Activated CD4-positive, alpha-beta T cell treated with anti-CD3 and anti-CD28 coated beads, Interleukin-2, amount 10 ng/mL, durations not matched to agents 24 days and 14 days (primary cell): ENCODE measurements at regions of chr9 and their contacts with region 1.

Region 1: GRCh38 chr9:69193685-69194032 is 19.6 kb downstream of the TJP2 start:
- DNase-seq: no peak
- H3K4me3 Mint-ChIP-seq: no peak overlapping the region
- H3K27ac Mint-ChIP-seq: no peak overlapping the region
- H3K4me1 Mint-ChIP-seq: peaks cover 29% of the 10 kb centered on the region
- H3K27me3 Mint-ChIP-seq: no peaks in the 10 kb centered on the region

Region 2: DNA sequence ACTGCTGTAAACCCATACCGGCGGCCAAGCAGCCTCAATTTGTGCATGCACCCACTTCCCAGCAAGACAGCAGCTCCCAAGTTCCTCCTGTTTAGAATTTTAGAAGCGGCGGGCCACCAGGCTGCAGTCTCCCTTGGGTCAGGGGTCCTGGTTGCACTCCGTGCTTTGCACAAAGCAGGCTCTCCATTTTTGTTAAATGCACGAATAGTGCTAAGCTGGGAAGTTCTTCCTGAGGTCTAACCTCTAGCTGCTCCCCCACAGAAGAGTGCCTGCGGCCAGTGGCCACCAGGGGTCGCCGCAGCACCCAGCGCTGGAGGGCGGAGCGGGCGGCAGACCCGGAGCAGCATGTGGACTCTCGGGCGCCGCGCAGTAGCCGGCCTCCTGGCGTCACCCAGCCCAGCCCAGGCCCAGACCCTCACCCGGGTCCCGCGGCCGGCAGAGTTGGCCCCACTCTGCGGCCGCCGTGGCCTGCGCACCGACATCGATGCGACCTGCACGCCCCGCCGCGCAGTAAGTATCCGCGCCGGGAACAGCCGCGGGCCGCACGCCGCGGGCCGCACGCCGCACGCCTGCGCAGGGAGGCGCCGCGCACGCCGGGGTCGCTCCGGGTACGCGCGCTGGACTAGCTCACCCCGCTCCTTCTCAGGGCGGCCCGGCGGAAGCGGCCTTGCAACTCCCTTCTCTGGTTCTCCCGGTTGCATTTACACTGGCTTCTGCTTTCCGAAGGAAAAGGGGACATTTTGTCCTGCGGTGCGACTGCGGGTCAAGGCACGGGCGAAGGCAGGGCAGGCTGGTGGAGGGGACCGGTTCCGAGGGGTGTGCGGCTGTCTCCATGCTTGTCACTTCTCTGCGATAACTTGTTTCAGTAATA is 158.0 kb before region 1 on chr9 and contains the start of gene FXN:
- intact Hi-C with region 1: loop called (anchors 2 kb)
- DNase-seq: peak; percentile 96
- H3K4me3 Mint-ChIP-seq: peak within 1 kb of the TSS; percentile 98
- H3K27ac Mint-ChIP-seq: peak within 1 kb of the TSS; percentile 93
- H3K4me1 Mint-ChIP-seq: peaks cover 17% of the 10 kb centered on the region
- H3K27me3 Mint-ChIP-seq: no peaks in the 10 kb centered on the region
- total RNA-seq, gene FXN: 45.4 and 47.3 TPM in 2 replicates

Region 3: DNA sequence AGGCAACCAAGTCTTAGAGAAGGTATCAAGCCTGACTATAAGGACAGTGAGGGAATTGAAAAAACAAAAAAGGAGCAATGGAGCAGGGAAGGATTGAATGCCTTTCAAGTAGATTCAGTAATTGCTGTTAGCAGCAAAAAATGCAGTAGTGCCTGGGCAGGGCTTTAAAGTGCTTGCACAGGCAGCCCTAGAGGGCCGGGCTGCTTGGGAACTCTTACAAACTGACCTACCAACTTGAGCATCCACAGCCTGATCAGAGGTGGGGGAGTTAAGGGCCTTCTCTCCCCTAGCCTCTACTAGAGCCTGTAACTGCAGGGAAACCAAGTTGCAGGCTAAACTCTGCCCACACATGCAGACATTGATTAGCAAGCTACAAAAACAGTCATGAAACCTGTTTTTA is 138.7 kb before region 1 on chr9:
- intact Hi-C with region 1: loop called (anchors 1 kb)
- DNase-seq: no peak
- H3K4me3 Mint-ChIP-seq: no peak overlapping the region
- H3K27ac Mint-ChIP-seq: no peak overlapping the region
- H3K4me1 Mint-ChIP-seq: peaks cover 11% of the 10 kb centered on the region
- H3K27me3 Mint-ChIP-seq: no peaks in the 10 kb centered on the region

Region 4: GRCh38 chr9:69121828-69122548 is 71.7 kb before region 1 on chr9:
- intact Hi-C with region 1: loop called (anchors 2 kb)
- DNase-seq: peak; percentile 85
- H3K4me3 Mint-ChIP-seq: peak overlapping the region; percentile 86
- H3K27ac Mint-ChIP-seq: peak overlapping the region; percentile 25
- H3K4me1 Mint-ChIP-seq: peaks cover 8% of the 10 kb centered on the region
- H3K27me3 Mint-ChIP-seq: peaks cover 13% of the 10 kb centered on the region

Region 5: DNA sequence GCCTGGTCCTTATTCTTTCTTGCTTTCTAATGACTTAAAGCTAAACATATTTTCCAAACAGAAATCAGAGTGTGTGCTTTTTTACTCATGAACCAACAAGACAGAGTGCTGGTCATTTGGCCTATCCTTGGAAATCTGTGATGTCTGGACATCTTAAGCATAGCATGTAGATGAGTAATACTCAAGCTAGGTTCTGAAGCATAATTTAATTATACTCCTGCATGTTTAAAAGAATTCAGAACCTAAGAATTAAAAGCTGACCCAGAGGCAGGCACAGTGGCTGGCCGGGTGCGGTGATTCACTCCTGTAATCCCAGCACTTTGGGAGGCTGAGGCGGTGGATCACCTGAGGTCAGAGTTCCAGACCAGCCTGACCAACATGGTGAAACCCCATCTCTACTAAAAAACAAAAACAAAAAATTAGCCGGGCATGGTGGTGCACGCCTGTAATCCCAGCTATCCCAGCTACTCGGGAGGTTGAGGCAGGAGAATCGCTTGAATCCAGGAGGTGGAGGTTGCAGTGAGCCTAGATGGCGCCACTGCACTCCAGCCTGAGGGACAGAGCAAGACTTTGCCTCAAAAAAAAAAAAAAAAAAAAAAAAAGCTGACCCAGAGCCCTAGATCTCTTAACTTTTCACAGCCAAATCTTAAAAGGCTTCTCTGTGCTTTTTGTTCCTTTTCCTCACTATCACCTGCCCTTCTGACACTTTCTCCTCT is 35.8 kb before region 1 on chr9:
- intact Hi-C with region 1: loop called (anchors 1 kb)
- DNase-seq: peak; percentile 71
- H3K4me3 Mint-ChIP-seq: no peak overlapping the region
- H3K27ac Mint-ChIP-seq: no peak overlapping the region
- H3K4me1 Mint-ChIP-seq: no peaks in the 10 kb centered on the region
- H3K27me3 Mint-ChIP-seq: peaks cover 2% of the 10 kb centered on the region